ENCODE measurements at regions of chrX and their contacts with region 1.

Region 1: DNA sequence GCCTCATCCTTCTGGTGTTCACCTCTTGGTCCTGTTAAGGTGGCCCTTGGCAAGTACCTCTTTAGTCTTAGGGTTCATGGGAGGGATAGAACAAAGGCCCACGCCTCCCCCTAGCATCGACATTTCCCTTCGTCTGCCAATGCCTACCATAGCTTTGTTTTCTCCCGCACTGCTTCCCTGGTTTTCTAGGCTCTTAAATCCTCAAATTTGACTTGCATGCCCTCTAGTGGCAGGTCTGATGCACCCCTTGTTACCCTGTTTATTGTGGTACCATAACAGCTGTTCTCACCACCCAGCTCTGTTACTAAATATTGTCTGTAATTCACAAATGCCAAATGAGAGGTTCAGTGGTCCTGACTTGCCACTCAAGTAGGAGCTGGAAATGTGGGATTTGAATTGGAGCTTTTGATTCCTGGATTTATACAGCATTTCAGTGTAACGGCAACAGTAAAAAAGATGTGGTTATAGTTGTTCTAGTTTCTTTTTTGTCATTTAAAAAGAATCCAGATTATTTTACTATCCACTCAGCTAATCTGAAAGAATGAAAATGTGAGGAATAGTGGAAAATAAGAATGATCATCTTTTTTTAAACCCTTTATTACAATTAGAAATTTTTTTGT is 100.1 kb downstream of the REPS2 start:
- DNase-seq: no peak
- ATAC-seq: peak; percentile 62

Region 2: GRCh38 chrX:16670998-16671397 is 375.6 kb before region 1 on chrX:
- intact Hi-C with region 1: no loop called
- DNase-seq: no peak
- ATAC-seq: no peak

Region 3: GRCh38 chrX:16826207-16826606 is 220.4 kb before region 1 on chrX:
- intact Hi-C with region 1: loop called (anchors 5 kb)
- DNase-seq: no peak
- ATAC-seq: no peak

Region 4: DNA sequence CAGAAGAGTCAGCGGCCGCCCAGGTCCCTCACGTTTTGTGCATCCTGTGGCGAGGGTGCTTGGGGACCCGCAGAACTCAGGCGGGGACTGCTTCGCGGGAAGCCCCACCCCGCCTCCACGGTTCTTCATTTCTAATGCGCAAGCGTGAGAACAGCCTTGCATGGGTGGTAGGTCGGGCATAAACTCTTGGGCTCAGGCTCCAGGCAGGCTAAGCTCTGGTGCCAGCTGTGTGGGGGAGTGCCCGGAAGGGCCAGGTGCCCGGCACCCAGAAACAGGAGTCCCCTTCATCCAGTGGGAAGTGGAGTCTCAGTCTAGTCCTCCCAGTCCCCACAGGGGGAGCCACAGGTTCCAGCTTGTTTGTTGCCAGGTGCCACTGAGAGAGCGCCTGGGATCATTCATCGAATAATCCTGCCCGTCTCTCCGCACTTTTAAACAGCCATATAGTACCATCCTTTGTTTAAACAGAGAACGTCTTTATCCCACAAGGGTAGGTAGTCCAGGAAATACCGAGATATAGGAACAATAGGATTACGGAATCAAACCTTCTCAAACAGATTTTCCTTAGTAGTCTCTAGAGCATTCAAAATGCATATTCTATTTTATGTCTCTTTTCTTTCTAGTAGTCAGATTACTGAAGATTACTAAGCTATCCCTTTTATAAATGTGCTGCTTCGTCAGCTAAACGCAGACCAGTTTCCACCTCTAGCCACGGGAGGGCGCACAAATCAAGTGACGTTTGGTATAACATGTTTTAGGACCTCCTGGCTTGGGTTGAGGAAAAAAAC is 163.7 kb before region 1 on chrX:
- intact Hi-C with region 1: loop called (anchors 2 kb)
- DNase-seq: peak; percentile 73
- ATAC-seq: peak; percentile 74

Region 5: DNA sequence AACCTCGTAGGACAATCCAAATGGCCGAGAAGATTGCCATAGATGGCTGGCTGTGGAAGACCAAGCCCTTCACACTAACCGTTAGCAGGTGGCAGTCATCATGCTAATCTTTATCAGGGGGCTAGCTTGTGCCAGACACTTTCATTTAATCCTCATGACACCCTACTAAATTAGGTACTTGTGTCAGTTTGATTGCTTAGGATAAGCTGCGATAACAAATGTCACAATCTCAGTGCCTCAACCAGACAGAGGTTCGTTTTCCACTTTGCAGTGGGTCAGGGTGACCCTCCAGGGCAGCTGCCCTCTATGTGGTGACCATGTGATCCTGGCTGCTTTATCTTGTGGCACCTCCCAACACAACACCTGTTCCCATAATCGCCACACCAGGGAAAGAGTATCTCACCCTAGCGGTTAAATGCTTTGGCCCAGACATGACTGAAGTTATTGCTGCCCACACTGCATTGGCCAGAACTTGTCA is 39.3 kb before region 1 on chrX:
- intact Hi-C with region 1: loop called (anchors 5 kb)
- DNase-seq: no peak
- ATAC-seq: no peak

Measured in Right ventricle myocardium inferior (tissue), 1 donor.